ENCODE measurements at regions of chr12 and their contacts with region 1.

Region 1: DNA sequence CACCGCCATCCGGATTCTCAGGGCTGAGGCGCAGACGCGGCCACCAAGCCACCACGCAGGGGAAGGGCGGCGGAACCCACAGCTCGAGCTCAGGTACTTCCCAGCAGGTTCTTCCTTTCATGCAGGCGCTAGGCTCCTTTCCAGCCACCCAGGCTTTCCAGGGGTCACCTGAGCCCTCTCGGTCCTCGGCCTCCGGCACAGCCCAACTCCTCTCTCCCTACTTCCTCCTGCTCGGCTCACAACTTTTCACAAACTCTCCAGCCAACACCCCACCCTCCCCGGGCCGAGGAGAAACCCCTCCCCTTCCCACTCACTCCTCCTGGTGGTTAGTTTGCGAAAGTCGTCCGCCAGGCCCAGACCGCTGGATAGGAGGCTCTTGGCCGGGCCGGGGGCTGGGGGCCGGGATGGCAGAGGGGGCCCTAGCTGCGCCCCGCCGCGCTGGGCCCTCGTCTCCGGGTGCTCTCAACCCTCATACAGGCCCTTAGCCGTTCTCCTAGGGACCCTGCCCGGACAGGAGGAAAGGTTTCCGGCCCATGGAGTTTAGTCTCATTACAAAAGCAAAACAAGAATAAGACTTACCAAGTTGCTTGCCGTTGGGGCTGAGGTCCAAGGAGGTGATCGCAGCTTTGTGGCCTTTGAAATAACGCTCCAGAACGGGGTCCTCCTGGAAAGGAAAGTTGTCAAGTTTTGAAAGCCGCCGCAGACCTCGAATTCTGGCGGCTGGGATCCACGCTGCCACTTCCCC is at the start of gene GALNT4:
- DNase-seq: peak; percentile 95
- H3K4me3 ChIP-seq: peak within 1 kb of the TSS; percentile 75 to 99 (median 96)
- H3K27ac ChIP-seq: peak within 1 kb of the TSS; percentile 78 to 97 (median 94)
- H3K4me1 ChIP-seq: peaks cover 27 to 84% (median 66%) of the 10 kb centered on the region in 6 donors
- H3K27me3 ChIP-seq: no peaks in the 10 kb centered on the region
- CTCF ChIP-seq: peak; percentile 54 to 85 (median 75)
- POLR2A ChIP-seq: peak in 1 of 3 donors; percentile 80
- total RNA-seq, gene GALNT4: 11.8 to 22.8 (median 15.2) TPM

Region 2: GRCh38 chr12:89019408-89020120 is 505.1 kb before region 1 on chr12:
- intact Hi-C with region 1: loop called (anchors 5 kb)
- DNase-seq: peak; percentile 73
- H3K4me3 ChIP-seq: peak overlapping the region in 2 of 8 donors; percentile 4 to 53
- H3K27ac ChIP-seq: no peak overlapping the region
- H3K4me1 ChIP-seq: peaks cover 5 to 22% (median 17%) of the 10 kb centered on the region in 6 donors
- H3K27me3 ChIP-seq: peaks cover 0 to 6% (median 0%) of the 10 kb centered on the region in 7 donors
- CTCF ChIP-seq: peak; percentile 77 to 93 (median 83)
- POLR2A ChIP-seq: no peak

Region 3: DNA sequence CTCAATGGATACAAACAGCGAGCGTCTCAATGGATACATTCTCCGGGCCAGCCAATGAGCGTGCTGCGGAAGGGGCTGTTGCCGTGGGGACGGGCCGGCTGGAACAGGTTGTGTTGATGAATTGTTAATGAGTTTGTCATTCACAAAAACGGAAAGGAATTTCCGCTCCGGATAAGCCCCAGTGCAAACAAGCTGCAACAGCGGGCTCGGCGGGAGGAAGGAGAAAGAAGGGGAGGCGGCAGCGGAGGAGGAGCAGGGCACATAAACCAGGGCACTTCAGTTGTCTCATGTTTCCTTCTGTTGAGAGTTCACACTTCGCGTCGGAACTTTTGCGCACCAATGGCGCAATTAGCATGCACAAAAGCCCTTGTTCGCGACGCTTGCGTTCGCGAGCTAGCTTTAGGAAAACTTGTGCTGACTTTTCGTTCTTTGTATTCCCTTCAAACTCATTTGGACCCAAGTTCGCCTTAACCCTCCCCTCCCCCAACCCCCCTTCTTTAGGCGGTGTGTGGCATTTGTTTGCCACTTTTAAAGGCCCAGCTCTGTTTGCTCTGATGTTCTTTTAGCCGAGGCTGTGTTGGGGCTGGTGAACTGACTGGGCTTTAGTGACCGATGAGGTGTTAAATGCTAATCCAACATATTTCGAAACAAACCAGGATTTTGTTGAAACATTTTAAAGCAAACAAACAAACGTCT is 172.1 kb before region 1 on chr12 and contains the start of gene DUSP6:
- intact Hi-C with region 1: loop called (anchors 5 kb)
- DNase-seq: peak; percentile 98
- H3K4me3 ChIP-seq: peak within 1 kb of the TSS; percentile 79 to 93 (median 84)
- H3K27ac ChIP-seq: peak within 1 kb of the TSS; percentile 97 to 100 (median 98)
- H3K4me1 ChIP-seq: peaks cover 18 to 87% (median 62%) of the 10 kb centered on the region in 6 donors
- H3K27me3 ChIP-seq: no peaks in the 10 kb centered on the region
- CTCF ChIP-seq: peak in 3 of 11 experiments; percentile 0 to 32 (median 27)
- POLR2A ChIP-seq: peak in 1 of 3 donors; percentile 95
- total RNA-seq, gene DUSP6: 104 to 193 (median 143) TPM

Measured in spleen (tissue), 13 donors.